AG04449 (cell line): ENCODE measurements at regions of chr2 and their contacts with region 1.

Region 1: GRCh38 chr2:207258263-207258991 is 92.7 kb upstream of the KLF7 start:
- DNase-seq: peak; percentile 100
- H3K4me3 ChIP-seq: no peak overlapping the region
- CTCF ChIP-seq: peak; percentile 29

Region 2: DNA sequence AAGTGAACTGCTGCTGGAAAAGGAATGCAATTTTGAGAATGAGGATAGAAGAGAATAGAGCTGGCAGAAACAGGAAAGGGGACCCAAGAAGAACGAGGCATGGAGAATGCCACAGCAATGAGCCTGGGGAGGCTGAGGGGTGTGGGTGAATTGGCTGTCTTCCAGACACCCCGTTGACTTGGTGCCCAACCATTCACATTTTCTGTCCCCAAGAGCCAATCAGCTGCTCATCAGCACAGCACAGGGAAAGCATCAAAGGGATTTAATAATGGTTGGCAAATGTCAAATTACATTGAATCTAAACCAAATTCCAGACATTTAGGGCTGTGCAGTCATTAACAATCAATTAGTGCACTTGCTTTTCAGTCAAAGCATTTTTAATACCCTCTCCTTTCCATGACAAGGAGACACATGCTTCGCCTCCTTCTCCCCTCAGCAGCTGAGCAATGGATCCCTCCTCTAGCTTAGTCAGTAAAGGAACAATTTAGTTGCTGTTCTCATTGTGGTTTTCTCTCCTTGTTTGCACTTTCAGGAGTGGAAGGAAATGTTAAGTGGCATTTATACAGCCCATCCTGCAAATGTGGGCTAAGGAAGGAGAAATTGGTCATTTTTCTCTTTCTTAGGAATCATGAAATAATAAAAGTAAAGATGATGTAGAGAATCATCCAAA is 191.5 kb before region 1 on chr2:
- CTCF ChIA-PET with region 1: no interaction called
- POLR2A ChIA-PET with region 1: no interaction called
- DNase-seq: no peak
- H3K4me3 ChIP-seq: no peak overlapping the region
- CTCF ChIP-seq: no peak

Region 3: DNA sequence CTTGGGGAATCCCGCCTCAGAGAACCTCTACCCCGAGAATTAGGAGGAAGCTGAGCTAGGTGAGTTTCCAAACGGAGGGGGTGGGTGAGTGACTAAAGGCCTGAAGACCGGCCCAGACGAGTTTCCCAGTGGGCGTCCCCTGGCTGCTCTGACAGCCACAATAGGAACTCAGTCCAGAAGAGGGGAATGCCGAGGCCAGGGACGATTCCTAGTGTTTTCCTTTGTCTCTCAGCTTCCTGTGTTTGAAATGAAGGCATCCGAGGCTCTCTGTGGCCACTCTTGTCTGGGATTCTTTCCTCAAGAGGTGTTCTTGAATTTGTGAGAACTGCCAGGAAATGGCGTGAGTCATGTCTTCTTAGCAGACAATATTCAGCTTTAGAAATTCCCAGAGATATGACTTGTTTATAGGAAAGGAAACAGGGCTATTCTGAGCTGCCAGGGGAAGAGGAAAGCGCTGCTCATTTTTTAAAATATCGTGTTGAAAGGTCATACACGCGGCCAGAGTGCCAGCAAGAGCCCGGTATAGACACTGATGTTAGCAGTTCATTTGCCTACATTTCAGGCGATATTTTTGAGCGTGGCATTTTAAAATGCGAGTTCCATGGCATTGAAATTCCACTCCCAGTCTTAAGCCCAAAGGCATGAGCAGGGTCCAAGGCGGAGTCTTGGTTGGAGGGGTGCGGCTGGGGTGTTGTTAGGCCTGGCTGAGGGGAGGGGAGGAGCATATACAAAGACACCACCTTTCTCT is 76.4 kb after region 1 on chr2:
- CTCF ChIA-PET with region 1: no interaction called
- POLR2A ChIA-PET with region 1: interaction called, 18 read pairs
- DNase-seq: peak; percentile 96
- H3K4me3 ChIP-seq: peak overlapping the region; percentile 45
- CTCF ChIP-seq: no peak